Heart right ventricle (tissue), 16 donors: ENCODE measurements at regions of chr18 and their contacts with region 1.

Region 1: DNA sequence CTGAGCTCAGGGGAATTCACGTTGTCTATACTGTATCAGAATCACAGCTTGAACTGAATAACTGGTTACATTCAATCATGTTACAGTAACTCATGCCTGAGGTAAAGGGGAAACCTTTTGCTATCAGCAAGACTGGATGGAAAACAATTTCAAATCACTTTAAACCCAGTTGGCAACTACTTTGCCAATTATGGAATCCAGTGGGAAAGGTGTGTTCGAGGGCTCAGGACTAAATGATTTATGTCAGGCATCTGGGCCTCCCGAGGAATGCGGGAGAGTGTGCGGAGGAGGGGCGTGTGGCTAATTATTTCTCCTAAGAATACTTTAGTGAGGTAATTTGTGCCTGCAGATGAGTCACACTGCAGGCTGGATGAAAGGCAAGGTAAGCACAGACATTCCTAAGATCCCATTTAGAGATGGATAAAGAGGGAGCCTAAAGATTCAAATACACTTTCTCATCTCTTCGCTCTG is 100.1 kb downstream of the HRH4 start:
- DNase-seq: no peak
- ATAC-seq: no peak
- H3K4me3 ChIP-seq: no peak overlapping the region
- H3K27ac ChIP-seq: no peak overlapping the region
- H3K4me1 ChIP-seq: no peaks in the 10 kb centered on the region
- H3K27me3 ChIP-seq: peaks cover 0 to 19% (median 9%) of the 10 kb centered on the region in 7 donors
- CTCF ChIP-seq: no peak

Region 2: GRCh38 chr18:23982155-23983079 is 578.1 kb before region 1 on chr18:
- intact Hi-C with region 1: no loop called
- DNase-seq: peak; percentile 53 to 73
- ATAC-seq: peak; percentile 63 to 97 (median 88)
- H3K4me3 ChIP-seq: peak overlapping the region in 2 of 10 donors; percentile 6 to 13
- H3K27ac ChIP-seq: peak overlapping the region in 1 of 10 donors; percentile 59
- H3K4me1 ChIP-seq: peaks cover 0 to 21% (median 7%) of the 10 kb centered on the region in 9 donors
- H3K27me3 ChIP-seq: no peaks in the 10 kb centered on the region
- CTCF ChIP-seq: no peak

Region 3: DNA sequence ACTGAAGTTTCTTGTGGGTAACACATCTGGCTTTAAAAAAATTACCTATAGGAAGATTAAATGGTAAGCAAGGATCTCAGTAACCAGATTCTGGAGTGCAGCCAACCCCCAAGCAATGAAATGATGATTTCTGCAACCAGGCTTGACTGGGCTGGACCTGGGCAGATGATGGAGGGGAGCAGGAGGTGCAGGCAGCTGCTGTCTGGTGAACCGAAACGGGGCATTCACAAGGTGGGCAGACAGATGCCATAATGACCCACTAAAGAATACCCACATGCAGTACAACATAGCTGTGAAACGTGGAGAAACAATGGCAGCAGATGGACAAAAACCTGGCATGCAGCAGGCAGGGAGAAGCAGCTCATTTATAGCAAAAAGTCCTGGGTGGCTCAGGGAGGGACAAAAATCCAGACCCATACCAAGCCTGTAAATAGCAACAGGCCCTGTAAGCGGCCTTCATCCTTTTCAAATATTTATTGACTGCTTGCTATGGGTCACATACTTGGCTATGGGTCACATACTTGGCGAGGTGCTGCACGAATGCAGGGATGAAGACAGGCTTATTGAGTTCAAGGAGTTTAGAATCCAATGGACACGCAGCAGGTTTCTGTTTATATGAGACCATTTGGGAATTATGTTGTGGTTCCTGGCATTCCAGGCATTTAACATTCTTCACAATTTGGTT is 144.5 kb after region 1 on chr18:
- intact Hi-C with region 1: no loop called
- DNase-seq: no peak
- ATAC-seq: no peak
- H3K4me3 ChIP-seq: no peak overlapping the region
- H3K27ac ChIP-seq: no peak overlapping the region
- H3K4me1 ChIP-seq: no peaks in the 10 kb centered on the region
- H3K27me3 ChIP-seq: peaks cover 0 to 7% (median 0%) of the 10 kb centered on the region in 7 donors
- CTCF ChIP-seq: no peak

Region 4: GRCh38 chr18:26524504-26525351 is 1964.2 kb after region 1 on chr18:
- intact Hi-C with region 1: loop called in 1 of 10 experiments (anchors 5 kb)
- DNase-seq: no peak
- ATAC-seq: no peak
- H3K4me3 ChIP-seq: no peak overlapping the region
- H3K27ac ChIP-seq: no peak overlapping the region
- H3K4me1 ChIP-seq: no peaks in the 10 kb centered on the region
- H3K27me3 ChIP-seq: no peaks in the 10 kb centered on the region
- CTCF ChIP-seq: no peak